ENCODE measurements at regions of chr1 and their contacts with region 1.

Region 1: DNA sequence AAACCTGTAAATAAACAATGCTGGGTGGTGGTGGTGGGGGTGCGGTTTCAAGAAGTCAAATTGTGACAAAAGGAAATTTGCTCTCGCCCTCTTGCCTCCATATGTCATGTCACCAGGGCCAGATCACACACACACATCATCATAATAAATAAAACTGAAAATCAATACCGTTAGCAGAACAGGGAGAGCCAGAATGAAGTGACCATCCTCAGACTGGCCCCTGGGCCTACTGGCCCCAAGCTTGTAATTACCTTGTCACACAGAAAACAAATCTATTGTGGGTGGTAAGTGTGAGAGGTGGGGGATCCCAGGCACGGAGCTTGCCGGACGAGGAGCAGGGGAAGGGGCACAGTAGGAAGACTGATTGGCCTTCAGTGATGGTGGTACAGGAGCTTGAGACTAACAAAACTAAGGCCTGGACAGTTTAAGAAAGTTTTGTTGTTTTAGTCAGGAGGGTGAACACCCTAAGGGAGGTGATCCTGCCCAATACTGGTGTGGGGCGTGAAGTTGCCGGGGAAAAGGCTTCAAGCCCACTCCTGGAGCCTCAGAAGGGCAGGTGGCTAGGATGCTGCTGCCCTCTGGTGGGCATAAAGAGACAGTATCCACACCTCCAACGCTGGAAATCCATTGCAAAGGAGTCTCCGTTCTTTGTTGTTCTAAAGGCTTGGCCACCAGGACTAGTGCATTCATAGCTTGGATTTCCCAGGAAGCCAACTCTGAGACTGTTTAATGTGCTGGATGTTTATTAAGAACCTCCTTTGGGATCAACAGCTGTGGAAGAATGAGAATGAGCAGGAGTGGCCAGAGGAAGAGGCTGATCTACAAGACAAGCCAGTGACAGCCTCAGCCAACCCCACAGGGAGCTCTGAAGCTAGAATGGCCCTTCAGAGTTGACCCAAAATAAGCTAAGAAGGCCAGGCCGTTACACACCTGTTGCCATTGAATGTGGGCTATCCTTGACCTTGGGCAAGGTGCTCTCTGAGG is 8.1 kb upstream of the C1orf216 start:
- DNase-seq: peak; percentile 71 to 82 (median 76)
- H3K4me3 ChIP-seq: no peak overlapping the region
- H3K27ac ChIP-seq: no peak overlapping the region
- H3K4me1 ChIP-seq: peaks cover 0 to 23% (median 14%) of the 10 kb centered on the region in 4 experiments
- H3K27me3 ChIP-seq: no peaks in the 10 kb centered on the region

Region 2: DNA sequence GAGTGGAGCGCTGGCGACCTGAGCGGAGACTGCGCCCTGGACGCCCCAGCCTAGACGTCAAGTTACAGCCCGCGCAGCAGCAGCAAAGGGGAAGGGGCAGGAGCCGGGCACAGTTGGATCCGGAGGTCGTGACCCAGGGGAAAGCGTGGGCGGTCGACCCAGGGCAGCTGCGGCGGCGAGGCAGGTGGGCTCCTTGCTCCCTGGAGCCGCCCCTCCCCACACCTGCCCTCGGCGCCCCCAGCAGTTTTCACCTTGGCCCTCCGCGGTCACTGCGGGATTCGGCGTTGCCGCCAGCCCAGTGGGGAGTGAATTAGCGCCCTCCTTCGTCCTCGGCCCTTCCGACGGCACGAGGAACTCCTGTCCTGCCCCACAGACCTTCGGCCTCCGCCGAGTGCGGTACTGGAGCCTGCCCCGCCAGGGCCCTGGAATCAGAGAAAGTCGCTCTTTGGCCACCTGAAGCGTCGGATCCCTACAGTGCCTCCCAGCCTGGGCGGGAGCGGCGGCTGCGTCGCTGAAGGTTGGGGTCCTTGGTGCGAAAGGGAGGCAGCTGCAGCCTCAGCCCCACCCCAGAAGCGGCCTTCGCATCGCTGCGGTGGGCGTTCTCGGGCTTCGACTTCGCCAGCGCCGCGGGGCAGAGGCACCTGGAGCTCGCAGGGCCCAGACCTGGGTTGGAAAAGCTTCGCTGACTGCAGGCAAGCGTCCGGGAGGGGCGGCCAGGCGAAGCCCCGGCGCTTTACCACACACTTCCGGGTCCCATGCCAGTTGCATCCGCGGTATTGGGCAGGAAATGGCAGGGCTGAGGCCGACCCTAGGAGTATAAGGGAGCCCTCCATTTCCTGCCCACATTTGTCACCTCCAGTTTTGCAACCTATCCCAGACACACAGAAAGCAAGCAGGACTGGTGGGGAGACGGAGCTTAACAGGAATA is 149.4 kb before region 1 on chr1:
- CTCF ChIA-PET with region 1: interaction called, 43 read pairs
- POLR2A ChIA-PET with region 1: interaction called, 6 read pairs
- DNase-seq: peak; percentile 91 to 99 (median 98)
- H3K4me3 ChIP-seq: peak overlapping the region; percentile 25 to 82 (median 67)
- H3K27ac ChIP-seq: peak overlapping the region in 1 of 2 experiments; percentile 55
- H3K4me1 ChIP-seq: peaks cover 3 to 51% (median 47%) of the 10 kb centered on the region in 4 experiments
- H3K27me3 ChIP-seq: peaks cover 0 to 6% (median 0%) of the 10 kb centered on the region in 5 experiments

Region 3: GRCh38 chr1:35715568-35716002 is 11.2 kb before region 1 on chr1:
- CTCF ChIA-PET with region 1: interaction called, 54 read pairs
- POLR2A ChIA-PET with region 1: interaction called, 4 read pairs
- DNase-seq: peak; percentile 70 to 83 (median 77)
- H3K4me3 ChIP-seq: no peak overlapping the region
- H3K27ac ChIP-seq: no peak overlapping the region
- H3K4me1 ChIP-seq: peaks cover 0 to 42% (median 35%) of the 10 kb centered on the region in 4 experiments
- H3K27me3 ChIP-seq: no peaks in the 10 kb centered on the region

Region 4: GRCh38 chr1:35745124-35745730 is 18.5 kb after region 1 on chr1:
- CTCF ChIA-PET with region 1: interaction called, 10 read pairs
- POLR2A ChIA-PET with region 1: no interaction called
- DNase-seq: no peak
- H3K4me3 ChIP-seq: no peak overlapping the region
- H3K27ac ChIP-seq: no peak overlapping the region
- H3K4me1 ChIP-seq: no peaks in the 10 kb centered on the region
- H3K27me3 ChIP-seq: no peaks in the 10 kb centered on the region

Region 5: GRCh38 chr1:35769188-35769758 is 42.5 kb after region 1 on chr1:
- CTCF ChIA-PET with region 1: interaction called, 17 read pairs
- POLR2A ChIA-PET with region 1: no interaction called
- DNase-seq: peak; percentile 92 to 94 (median 93)
- H3K4me3 ChIP-seq: peak overlapping the region; percentile 78 to 95 (median 88)
- H3K27ac ChIP-seq: peak overlapping the region; percentile 74 to 87
- H3K4me1 ChIP-seq: peaks cover under 1 to 14% (median 9%) of the 10 kb centered on the region in 4 experiments
- H3K27me3 ChIP-seq: no peaks in the 10 kb centered on the region

Region 6: DNA sequence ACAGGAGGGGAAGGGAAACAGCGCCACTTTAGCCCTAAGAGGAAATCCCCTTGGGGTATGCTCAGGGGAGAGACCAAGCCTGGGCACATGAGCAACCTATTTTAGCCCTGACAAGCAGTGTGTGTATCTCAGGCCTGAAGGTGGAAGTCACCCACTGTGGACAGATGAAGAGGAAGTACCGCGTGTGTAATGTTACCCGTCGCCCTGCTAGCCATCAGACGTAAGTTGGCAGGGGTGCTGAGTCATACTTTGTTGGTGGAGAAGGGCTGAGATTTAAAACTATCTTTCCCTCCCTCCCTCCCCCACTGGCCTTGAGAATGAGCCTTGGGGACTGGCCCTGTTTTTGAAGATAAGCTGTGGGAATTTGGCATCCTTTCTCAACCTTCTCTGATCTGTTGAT is 167.4 kb after region 1 on chr1:
- CTCF ChIA-PET with region 1: no interaction called
- POLR2A ChIA-PET with region 1: no interaction called
- DNase-seq: peak; percentile 73 to 94 (median 94)
- H3K4me3 ChIP-seq: no peak overlapping the region
- H3K27ac ChIP-seq: peak overlapping the region in 1 of 2 experiments; percentile 46
- H3K4me1 ChIP-seq: peaks cover 0 to 15% (median 11%) of the 10 kb centered on the region in 4 experiments
- H3K27me3 ChIP-seq: no peaks in the 10 kb centered on the region